Uterus (tissue), 4 donors: ENCODE measurements at regions of chr22 and their contacts with region 1.

Region 1: GRCh38 chr22:23313791-23314190 is 133.5 kb downstream of the BCR start:
- DNase-seq: no peak
- H3K4me3 ChIP-seq: no peak overlapping the region
- H3K27ac ChIP-seq: no peak overlapping the region
- H3K4me1 ChIP-seq: no peaks in the 10 kb centered on the region
- H3K27me3 ChIP-seq: no peaks in the 10 kb centered on the region
- CTCF ChIP-seq: no peak
- POLR2A ChIP-seq: no peak

Region 2: DNA sequence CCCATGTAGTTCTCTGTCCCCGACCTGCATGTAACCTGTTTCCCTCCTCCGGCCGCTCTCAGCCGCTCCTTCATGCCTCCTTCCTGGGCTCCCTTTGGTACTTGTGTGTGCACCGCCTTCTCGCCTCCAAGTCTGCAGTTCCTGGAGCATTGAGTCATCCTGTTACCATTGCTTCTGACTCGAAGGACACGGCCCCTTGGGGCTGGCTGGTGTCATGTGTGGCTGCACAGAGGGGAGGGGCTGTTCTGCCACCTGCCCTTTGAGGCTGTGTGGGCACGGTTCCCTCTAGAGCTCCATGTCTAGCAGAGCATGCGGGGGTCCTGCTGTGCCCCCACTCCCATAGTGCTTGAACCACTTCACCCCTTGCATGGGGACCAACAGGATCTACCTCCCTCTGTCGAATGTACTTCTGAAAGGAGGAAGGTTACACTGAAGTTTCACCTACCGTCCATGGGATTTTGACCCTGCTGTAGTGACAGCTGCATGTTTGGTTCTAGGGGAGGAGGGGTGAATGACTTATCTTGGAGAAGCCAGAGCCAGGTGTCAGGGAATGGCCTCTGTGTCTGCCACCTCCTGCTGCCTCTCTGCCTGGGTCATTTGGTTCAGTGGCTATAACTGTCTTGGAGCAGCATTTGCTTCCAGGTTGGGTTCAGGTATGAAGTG is 93.8 kb before region 1 on chr22:
- intact Hi-C with region 1: no loop called
- DNase-seq: no peak
- H3K4me3 ChIP-seq: no peak overlapping the region
- H3K27ac ChIP-seq: no peak overlapping the region
- H3K4me1 ChIP-seq: peaks cover 0 to 13% of the 10 kb centered on the region in 2 donors
- H3K27me3 ChIP-seq: no peaks in the 10 kb centered on the region
- CTCF ChIP-seq: no peak
- POLR2A ChIP-seq: no peak

Region 3: GRCh38 chr22:23385291-23386244 is 71.8 kb after region 1 on chr22:
- intact Hi-C with region 1: loop called (anchors 5 kb)
- DNase-seq: peak; percentile 73 to 81
- H3K4me3 ChIP-seq: no peak overlapping the region
- H3K27ac ChIP-seq: no peak overlapping the region
- H3K4me1 ChIP-seq: no peaks in the 10 kb centered on the region
- H3K27me3 ChIP-seq: no peaks in the 10 kb centered on the region
- CTCF ChIP-seq: peak; percentile 96 to 98 (median 98)
- POLR2A ChIP-seq: peak in 1 of 2 donors; percentile 12